Esophagus muscularis mucosa (tissue), 4 donors: ENCODE measurements at regions of chr3 and their contacts with region 1.

Region 1: GRCh38 chr3:136752422-136753325 is 496 bp upstream of the STAG1 start:
- DNase-seq: peak; percentile 99
- H3K4me3 ChIP-seq: peak overlapping the region; percentile 83 to 96 (median 90)
- H3K27ac ChIP-seq: peak overlapping the region; percentile 97 to 100 (median 100)
- H3K4me1 ChIP-seq: peaks cover 27 to 44% (median 41%) of the 10 kb centered on the region in 4 donors
- H3K27me3 ChIP-seq: no peaks in the 10 kb centered on the region
- CTCF ChIP-seq: peak; percentile 29 to 39 (median 31)
- EP300 ChIP-seq: no peak
- POLR2A ChIP-seq: peak; percentile 35

Region 2: GRCh38 chr3:136075218-136075808 is 677.4 kb before region 1 on chr3:
- intact Hi-C with region 1: loop called (anchors 1 kb)
- DNase-seq: no peak
- H3K4me3 ChIP-seq: no peak overlapping the region
- H3K27ac ChIP-seq: no peak overlapping the region
- H3K4me1 ChIP-seq: peaks cover 20 to 29% (median 22%) of the 10 kb centered on the region in 4 donors
- H3K27me3 ChIP-seq: no peaks in the 10 kb centered on the region
- CTCF ChIP-seq: peak in 2 of 3 experiments; percentile 90 to 94
- EP300 ChIP-seq: no peak
- POLR2A ChIP-seq: no peak

Region 3: GRCh38 chr3:136250226-136250902 is 502.3 kb before region 1 on chr3 and contains the start of gene PCCB:
- intact Hi-C with region 1: loop called (anchors 10 kb)
- DNase-seq: peak; percentile 98
- H3K4me3 ChIP-seq: peak within 1 kb of the TSS; percentile 65 to 87 (median 73)
- H3K27ac ChIP-seq: peak within 1 kb of the TSS; percentile 87 to 94 (median 92)
- H3K4me1 ChIP-seq: peaks cover 20 to 22% (median 21%) of the 10 kb centered on the region in 4 donors
- H3K27me3 ChIP-seq: no peaks in the 10 kb centered on the region
- CTCF ChIP-seq: peak; percentile 68 to 82 (median 76)
- EP300 ChIP-seq: no peak
- POLR2A ChIP-seq: peak; percentile 30
- total RNA-seq, gene PCCB: 25.8 to 35.6 (median 31.4) TPM

Region 4: GRCh38 chr3:136390574-136390973 is 362.1 kb before region 1 on chr3:
- intact Hi-C with region 1: loop called (anchors 5 kb)
- DNase-seq: no peak
- H3K4me3 ChIP-seq: no peak overlapping the region
- H3K27ac ChIP-seq: no peak overlapping the region
- H3K4me1 ChIP-seq: peaks cover 0 to 10% (median 8%) of the 10 kb centered on the region in 4 donors
- H3K27me3 ChIP-seq: no peaks in the 10 kb centered on the region
- CTCF ChIP-seq: no peak
- EP300 ChIP-seq: no peak
- POLR2A ChIP-seq: no peak

Region 5: GRCh38 chr3:136543385-136543784 is 209.3 kb before region 1 on chr3:
- intact Hi-C with region 1: loop called (anchors 5 kb)
- DNase-seq: no peak
- H3K4me3 ChIP-seq: no peak overlapping the region
- H3K27ac ChIP-seq: no peak overlapping the region
- H3K4me1 ChIP-seq: no peaks in the 10 kb centered on the region
- H3K27me3 ChIP-seq: no peaks in the 10 kb centered on the region
- CTCF ChIP-seq: no peak
- EP300 ChIP-seq: no peak
- POLR2A ChIP-seq: no peak

Region 6: GRCh38 chr3:136792556-136793330 is 40.1 kb after region 1 on chr3:
- intact Hi-C with region 1: no loop called
- DNase-seq: no peak
- H3K4me3 ChIP-seq: no peak overlapping the region
- H3K27ac ChIP-seq: no peak overlapping the region
- H3K4me1 ChIP-seq: peaks cover under 1 to 7% (median 6%) of the 10 kb centered on the region in 4 donors
- H3K27me3 ChIP-seq: no peaks in the 10 kb centered on the region
- CTCF ChIP-seq: no peak
- EP300 ChIP-seq: no peak
- POLR2A ChIP-seq: no peak

Region 7: GRCh38 chr3:136861890-136862616 is 109.4 kb after region 1 on chr3 and contains the start of gene NCK1:
- intact Hi-C with region 1: loop called (anchors 5 kb)
- DNase-seq: peak; percentile 99
- H3K4me3 ChIP-seq: peak within 1 kb of the TSS; percentile 82 to 92 (median 86)
- H3K27ac ChIP-seq: peak within 1 kb of the TSS; percentile 94 to 96 (median 95)
- H3K4me1 ChIP-seq: peaks cover 17 to 32% (median 27%) of the 10 kb centered on the region in 4 donors
- H3K27me3 ChIP-seq: no peaks in the 10 kb centered on the region
- CTCF ChIP-seq: peak in 1 of 3 experiments; percentile 18
- EP300 ChIP-seq: no peak
- POLR2A ChIP-seq: no peak
- total RNA-seq, gene NCK1: 28.9 to 54.0 (median 37.0) TPM

Region 8: GRCh38 chr3:137013955-137014688 is 261.4 kb after region 1 on chr3:
- intact Hi-C with region 1: loop called (anchors 1 kb)
- DNase-seq: peak; percentile 98
- H3K4me3 ChIP-seq: peak overlapping the region; percentile 48 to 62 (median 52)
- H3K27ac ChIP-seq: peak overlapping the region; percentile 71 to 81 (median 73)
- H3K4me1 ChIP-seq: peaks cover 8 to 12% (median 9%) of the 10 kb centered on the region in 4 donors
- H3K27me3 ChIP-seq: no peaks in the 10 kb centered on the region
- CTCF ChIP-seq: peak; percentile 85 to 96 (median 91)
- EP300 ChIP-seq: no peak
- POLR2A ChIP-seq: no peak